Gastrocnemius medialis (tissue), 4 donors: ENCODE measurements at regions of chr4 and their contacts with region 1.

Region 1: GRCh38 chr4:185217408-185217975 is 8.1 kb downstream of the SNX25 start:
- DNase-seq: no peak
- ATAC-seq: no peak
- H3K4me3 ChIP-seq: no peak overlapping the region
- H3K27ac ChIP-seq: peak overlapping the region in 1 of 4 donors; percentile 14
- H3K4me1 ChIP-seq: peaks cover 14 to 20% of the 10 kb centered on the region in 2 donors
- H3K27me3 ChIP-seq: no peaks in the 10 kb centered on the region
- CTCF ChIP-seq: no peak
- POLR2A ChIP-seq: no peak

Region 2: DNA sequence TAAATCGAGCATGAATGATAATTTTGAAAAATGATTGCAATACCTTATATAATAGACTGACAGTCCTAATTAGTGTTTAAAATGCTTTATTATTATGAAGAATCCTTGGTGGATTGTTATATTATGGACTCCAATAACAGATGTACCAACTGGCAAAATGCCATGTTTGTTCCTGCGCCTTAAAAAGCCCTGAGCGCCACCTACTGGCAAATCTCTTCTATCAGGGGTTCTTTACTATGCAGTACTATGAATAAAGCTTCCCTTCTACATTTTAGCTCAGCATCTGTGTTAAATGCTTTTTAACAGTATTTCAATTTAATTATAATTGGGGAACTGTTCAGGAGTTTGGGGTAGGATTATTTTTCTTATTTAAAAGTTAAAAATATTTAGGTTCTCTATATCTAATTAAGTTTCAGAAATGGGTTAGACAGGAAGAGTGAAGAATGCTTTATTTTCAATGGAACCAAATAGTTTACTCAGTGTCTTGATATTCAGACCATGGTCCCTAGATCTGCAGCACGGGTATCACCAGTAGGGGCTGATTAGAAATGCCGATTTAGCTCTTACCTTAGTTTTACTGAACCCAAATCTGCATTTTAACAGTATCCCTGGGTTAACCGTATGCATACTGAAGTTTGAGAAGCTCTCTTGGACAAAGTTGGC is 33.7 kb before region 1 on chr4:
- in situ Hi-C with region 1: no loop called
- intact Hi-C with region 1: loop called (anchors 1 kb)
- DNase-seq: peak; percentile 71 to 73
- ATAC-seq: peak; percentile 77 to 86
- H3K4me3 ChIP-seq: no peak overlapping the region
- H3K27ac ChIP-seq: peak overlapping the region in 1 of 4 donors; percentile 10
- H3K4me1 ChIP-seq: peaks cover 0 to 6% of the 10 kb centered on the region in 2 donors
- H3K27me3 ChIP-seq: no peaks in the 10 kb centered on the region
- CTCF ChIP-seq: peak; percentile 63 to 86 (median 73)
- POLR2A ChIP-seq: no peak

Region 3: DNA sequence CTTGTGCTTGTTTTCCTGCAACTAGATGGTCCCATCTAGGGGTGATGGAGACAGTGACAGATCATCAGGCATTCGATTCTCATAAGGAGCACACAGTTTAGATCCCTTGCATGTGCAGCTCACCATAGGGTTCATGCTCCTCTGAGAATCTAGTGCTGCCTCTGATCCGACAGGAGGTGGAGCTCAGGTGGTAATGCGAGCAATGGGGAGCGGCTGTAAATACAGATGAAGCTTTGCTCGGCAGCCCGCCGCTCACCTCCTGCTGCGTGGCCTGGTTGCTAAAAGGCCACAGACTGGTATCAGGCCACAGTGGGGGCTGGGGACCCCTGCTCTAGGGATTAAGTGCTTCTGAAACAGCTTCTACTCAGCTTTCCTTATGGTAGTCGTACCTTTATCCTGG is 282.5 kb after region 1 on chr4:
- in situ Hi-C with region 1: no loop called
- intact Hi-C with region 1: no loop called
- DNase-seq: peak in 1 of 2 donors; percentile 76
- ATAC-seq: peak; percentile 9 to 16
- H3K4me3 ChIP-seq: no peak overlapping the region
- H3K27ac ChIP-seq: peak overlapping the region; percentile 83 to 96 (median 92)
- H3K4me1 ChIP-seq: peaks cover 9 to 20% of the 10 kb centered on the region in 2 donors
- H3K27me3 ChIP-seq: no peaks in the 10 kb centered on the region
- CTCF ChIP-seq: peak in 1 of 5 experiments; percentile 21
- POLR2A ChIP-seq: peak in 1 of 2 donors; percentile 15